ENCODE measurements at regions of chrX and their contacts with region 1.

Region 1: GRCh38 chrX:24498975-24499374 is 33.9 kb downstream of the PDK3 start:
- DNase-seq: no peak
- CTCF ChIP-seq: peak; percentile 18

Region 2: GRCh38 chrX:24282381-24283126 is 216.4 kb before region 1 on chrX:
- CTCF ChIA-PET with region 1: no interaction called
- POLR2A ChIA-PET with region 1: no interaction called
- DNase-seq: no peak
- CTCF ChIP-seq: no peak

Region 3: DNA sequence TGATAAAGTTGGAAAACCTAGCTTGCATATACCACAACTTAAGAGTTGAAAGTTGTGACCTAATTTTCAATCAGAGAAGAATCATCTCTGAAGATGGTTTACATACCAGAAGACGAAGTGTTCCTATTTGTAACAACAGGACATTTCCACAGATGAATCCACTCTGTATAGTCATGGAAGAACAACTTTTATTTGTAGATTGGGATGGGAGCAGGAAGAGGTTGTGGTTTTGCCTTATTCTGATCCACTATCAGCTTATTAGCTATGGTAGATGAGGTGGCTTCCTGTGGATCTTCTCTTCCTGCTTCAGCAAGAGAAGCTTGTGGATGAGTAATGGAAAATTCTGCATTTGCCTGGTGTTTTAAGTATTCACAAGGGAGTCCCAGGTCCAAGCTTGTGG is 157.2 kb before region 1 on chrX:
- CTCF ChIA-PET with region 1: no interaction called
- POLR2A ChIA-PET with region 1: no interaction called
- DNase-seq: no peak
- CTCF ChIP-seq: no peak

Region 4: DNA sequence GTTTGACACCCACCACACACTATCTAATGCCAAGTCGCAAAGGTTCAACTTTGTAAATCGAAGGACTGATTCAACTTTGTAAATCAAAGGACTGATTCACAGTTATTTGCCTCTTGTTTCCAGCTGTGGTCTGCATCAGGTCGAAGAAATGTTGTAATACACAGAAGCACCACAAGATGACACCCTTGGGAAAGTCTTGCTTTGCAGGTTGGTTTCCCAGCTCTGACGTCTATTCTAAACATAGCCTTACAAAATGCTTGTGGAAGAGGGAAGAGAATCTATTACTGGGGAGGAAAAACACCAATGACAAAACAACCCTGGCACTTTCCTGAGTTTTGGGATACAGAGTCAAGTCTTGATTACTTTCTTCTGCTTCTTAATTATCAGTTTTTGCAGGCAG is 103.2 kb before region 1 on chrX:
- CTCF ChIA-PET with region 1: interaction called, 54 read pairs
- POLR2A ChIA-PET with region 1: no interaction called
- DNase-seq: peak; percentile 54
- CTCF ChIP-seq: peak; percentile 46

Region 5: DNA sequence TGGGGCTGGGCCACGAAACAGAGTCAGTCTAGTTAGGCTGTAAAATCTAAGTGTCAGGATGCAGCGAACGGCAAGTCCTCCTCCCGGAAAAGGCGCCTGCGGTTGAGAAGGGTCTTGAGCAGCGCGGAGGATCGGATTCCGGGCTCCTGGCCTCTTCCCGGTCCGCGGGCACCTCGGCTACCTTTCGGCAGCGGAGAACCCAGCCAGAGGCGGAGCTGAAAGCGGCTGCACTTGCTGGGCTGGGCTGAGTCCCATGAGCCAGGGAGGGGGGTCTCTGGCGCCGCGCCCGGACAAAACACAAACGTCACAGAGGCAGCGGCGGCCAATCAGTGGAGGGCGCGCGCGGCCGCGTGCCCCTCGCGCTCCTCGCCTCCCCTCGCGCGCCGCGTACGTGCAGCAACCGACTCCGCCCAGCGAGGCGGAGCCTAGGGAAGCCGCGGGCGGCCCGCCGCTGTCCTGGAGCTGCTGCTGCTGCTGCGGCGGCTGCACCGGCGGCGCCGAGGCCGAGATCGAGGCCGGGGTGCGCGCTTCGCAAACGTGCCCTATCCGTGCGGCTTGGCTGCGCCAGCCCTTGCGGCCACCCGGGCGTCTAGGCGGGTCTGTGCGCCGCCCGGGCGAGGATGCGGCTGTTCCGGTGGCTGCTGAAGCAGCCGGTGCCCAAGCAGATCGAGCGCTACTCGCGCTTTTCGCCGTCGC is 34.0 kb before region 1 on chrX and contains the start of gene PDK3:
- CTCF ChIA-PET with region 1: interaction called, 12 read pairs
- POLR2A ChIA-PET with region 1: no interaction called
- DNase-seq: peak; percentile 85
- CTCF ChIP-seq: no peak

Region 6: DNA sequence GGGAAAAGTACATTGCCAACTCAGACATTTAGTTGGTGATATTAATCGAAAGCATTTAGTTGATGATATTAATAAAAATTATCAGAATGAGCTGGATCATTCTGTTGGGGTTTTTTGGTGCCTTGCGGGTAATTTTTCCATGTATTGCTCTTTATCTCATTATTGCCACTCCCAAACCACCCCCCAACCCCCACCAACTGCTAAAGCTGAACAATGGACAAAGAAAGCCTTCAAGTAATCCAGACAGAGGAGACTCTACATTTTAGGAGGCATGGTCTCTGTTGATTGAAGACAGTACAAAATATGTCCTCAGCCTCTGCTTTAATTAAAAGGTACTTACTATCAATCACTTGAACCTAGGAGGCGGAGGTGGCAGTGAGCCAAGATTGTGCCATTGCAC is 11.4 kb before region 1 on chrX:
- CTCF ChIA-PET with region 1: interaction called, 10 read pairs
- POLR2A ChIA-PET with region 1: no interaction called
- DNase-seq: no peak
- CTCF ChIP-seq: no peak

Region 7: GRCh38 chrX:24515447-24515846 is 16.5 kb after region 1 on chrX:
- CTCF ChIA-PET with region 1: interaction called, 10 read pairs
- POLR2A ChIA-PET with region 1: no interaction called
- DNase-seq: no peak
- CTCF ChIP-seq: no peak